Heart left ventricle (tissue), 16 donors: ENCODE measurements at regions of chr14 and their contacts with region 1.

Region 1: GRCh38 chr14:103408491-103409155 is 23.4 kb downstream of the MARK3 start:
- DNase-seq: no peak
- ATAC-seq: peak in 1 of 4 donors; percentile 7
- H3K4me3 ChIP-seq: peak overlapping the region in 2 of 12 donors; percentile 43 to 47
- H3K27ac ChIP-seq: peak overlapping the region in 11 of 12 donors; percentile 4 to 72 (median 54)
- H3K4me1 ChIP-seq: peaks cover 0 to 47% (median 32%) of the 10 kb centered on the region in 12 donors
- H3K27me3 ChIP-seq: no peaks in the 10 kb centered on the region
- CTCF ChIP-seq: no peak
- POLR2A ChIP-seq: no peak

Region 2: GRCh38 chr14:103444837-103445524 is 36.4 kb after region 1 on chr14:
- intact Hi-C with region 1: loop called in 1 of 10 experiments (anchors 5 kb)
- DNase-seq: no peak
- ATAC-seq: peak; percentile 19 to 71 (median 62)
- H3K4me3 ChIP-seq: no peak overlapping the region
- H3K27ac ChIP-seq: peak overlapping the region in 3 of 12 donors; percentile 9 to 23 (median 12)
- H3K4me1 ChIP-seq: peaks cover 10 to 72% (median 41%) of the 10 kb centered on the region in 12 donors
- H3K27me3 ChIP-seq: no peaks in the 10 kb centered on the region
- CTCF ChIP-seq: no peak
- POLR2A ChIP-seq: no peak

Region 3: GRCh38 chr14:103463149-103463548 is 54.5 kb after region 1 on chr14:
- intact Hi-C with region 1: no loop called
- DNase-seq: no peak
- ATAC-seq: no peak
- H3K4me3 ChIP-seq: no peak overlapping the region
- H3K27ac ChIP-seq: no peak overlapping the region
- H3K4me1 ChIP-seq: no peaks in the 10 kb centered on the region
- H3K27me3 ChIP-seq: no peaks in the 10 kb centered on the region
- CTCF ChIP-seq: no peak
- POLR2A ChIP-seq: no peak